Naive thymus-derived CD4-positive, alpha-beta T cell (primary cell): ENCODE measurements at regions of chr1 and their contacts with region 1.

Region 1: GRCh38 chr1:246901874-246902273 is 29.9 kb downstream of the AHCTF1 start:
- DNase-seq: no peak
- ATAC-seq: no peak
- H3K4me3 ChIP-seq: no peak overlapping the region
- H3K4me3 Mint-ChIP-seq: no peak overlapping the region
- H3K27ac ChIP-seq: no peak overlapping the region
- H3K27ac Mint-ChIP-seq: peak overlapping the region in 1 of 9 donors; percentile 9
- H3K4me1 ChIP-seq: no peaks in the 10 kb centered on the region
- H3K4me1 Mint-ChIP-seq: peaks cover 0 to 15% (median 6%) of the 10 kb centered on the region in 7 donors
- H3K27me3 ChIP-seq: no peaks in the 10 kb centered on the region
- H3K27me3 Mint-ChIP-seq: no peaks in the 10 kb centered on the region

Region 2: DNA sequence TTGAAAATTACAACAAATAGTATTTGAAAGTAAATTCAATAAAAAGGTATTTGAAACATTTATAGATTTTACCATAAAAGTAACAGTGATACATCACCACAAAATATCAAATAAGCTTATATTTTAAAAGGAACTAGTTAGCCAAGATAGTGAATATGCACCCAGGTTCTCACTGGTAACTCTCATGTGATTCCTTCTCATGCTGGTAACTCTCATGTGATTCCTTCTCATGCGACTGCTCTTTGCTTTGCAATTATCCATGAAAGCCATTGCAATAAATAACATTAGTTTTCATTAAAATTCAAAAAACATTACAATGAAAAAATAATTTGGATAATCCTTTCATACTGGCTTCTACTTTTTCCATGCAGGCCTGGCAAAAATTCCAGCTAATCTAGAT is 45.5 kb before region 1 on chr1:
- CTCF ChIA-PET with region 1: no interaction called
- POLR2A ChIA-PET with region 1: no interaction called
- intact Hi-C with region 1: no loop called
- DNase-seq: no peak
- ATAC-seq: no peak
- H3K4me3 ChIP-seq: no peak overlapping the region
- H3K4me3 Mint-ChIP-seq: no peak overlapping the region
- H3K27ac ChIP-seq: no peak overlapping the region
- H3K27ac Mint-ChIP-seq: no peak overlapping the region
- H3K4me1 ChIP-seq: no peaks in the 10 kb centered on the region
- H3K4me1 Mint-ChIP-seq: peaks cover 0 to 2% (median 0%) of the 10 kb centered on the region in 7 donors
- H3K27me3 ChIP-seq: no peaks in the 10 kb centered on the region
- H3K27me3 Mint-ChIP-seq: no peaks in the 10 kb centered on the region

Region 3: GRCh38 chr1:246888522-246888921 is 13.4 kb before region 1 on chr1:
- CTCF ChIA-PET with region 1: no interaction called
- POLR2A ChIA-PET with region 1: no interaction called
- intact Hi-C with region 1: loop called in 1 of 2 experiments (anchors 2 kb)
- DNase-seq: no peak
- ATAC-seq: no peak
- H3K4me3 ChIP-seq: no peak overlapping the region
- H3K4me3 Mint-ChIP-seq: no peak overlapping the region
- H3K27ac ChIP-seq: no peak overlapping the region
- H3K27ac Mint-ChIP-seq: peak overlapping the region in 2 of 9 donors; percentile 6 to 11
- H3K4me1 ChIP-seq: no peaks in the 10 kb centered on the region
- H3K4me1 Mint-ChIP-seq: peaks cover 0 to 6% (median 0%) of the 10 kb centered on the region in 7 donors
- H3K27me3 ChIP-seq: no peaks in the 10 kb centered on the region
- H3K27me3 Mint-ChIP-seq: no peaks in the 10 kb centered on the region